ENCODE measurements at regions of chr18 and their contacts with region 1.

Region 1: GRCh38 chr18:79644006-79644665 is 35.5 kb upstream of the CTDP1 start:
- DNase-seq: peak; percentile 31 to 71 (median 58)
- H3K4me3 ChIP-seq: no peak overlapping the region
- H3K27ac ChIP-seq: no peak overlapping the region
- H3K4me1 ChIP-seq: no peaks in the 10 kb centered on the region
- H3K27me3 ChIP-seq: peaks cover 12% of the 10 kb centered on the region
- CTCF ChIP-seq: peak; percentile 76 to 98 (median 90)
- POLR2A ChIP-seq: no peak

Region 2: DNA sequence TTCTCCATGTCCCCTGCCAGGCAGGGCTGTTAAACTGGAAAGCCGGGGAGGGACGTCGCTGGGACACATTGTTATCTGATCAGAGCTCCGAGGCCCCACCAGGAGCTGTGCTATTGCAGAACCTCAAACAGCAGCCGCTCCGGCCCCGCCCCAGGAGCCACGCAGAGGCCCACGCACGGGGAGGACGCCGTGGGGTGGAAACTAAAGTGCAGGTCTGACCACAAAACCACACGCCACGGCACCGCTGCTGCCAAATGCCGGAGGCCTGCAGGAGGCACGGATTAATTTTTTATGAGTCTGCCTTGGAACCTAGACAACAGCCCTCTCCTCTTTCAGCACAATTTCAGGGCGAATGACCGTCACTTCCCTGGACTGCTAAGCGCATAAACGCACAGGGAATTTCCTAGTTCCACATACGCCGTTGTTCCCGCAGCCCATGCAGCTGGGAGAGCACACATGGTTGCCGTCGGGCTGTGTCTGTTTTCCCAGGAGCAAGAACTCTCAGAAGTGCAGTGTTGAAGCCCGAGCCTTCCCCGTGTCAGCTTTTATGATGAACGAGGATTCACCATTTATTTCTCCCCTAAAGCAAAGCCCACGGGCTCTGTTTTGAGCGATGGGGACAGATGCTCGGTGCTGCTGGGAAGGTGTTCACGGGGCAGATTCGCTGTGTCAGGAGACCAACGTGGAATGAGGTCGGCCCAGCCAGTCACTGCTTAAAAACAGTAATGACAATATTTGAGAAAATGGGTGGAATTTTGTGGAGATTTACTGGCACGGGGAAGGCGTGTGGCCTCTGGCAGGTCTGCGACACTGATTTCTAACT is 204.7 kb before region 1 on chr18:
- intact Hi-C with region 1: no loop called
- DNase-seq: no peak
- H3K4me3 ChIP-seq: no peak overlapping the region
- H3K27ac ChIP-seq: no peak overlapping the region
- H3K4me1 ChIP-seq: no peaks in the 10 kb centered on the region
- H3K27me3 ChIP-seq: no peaks in the 10 kb centered on the region
- CTCF ChIP-seq: no peak
- POLR2A ChIP-seq: no peak

Region 3: DNA sequence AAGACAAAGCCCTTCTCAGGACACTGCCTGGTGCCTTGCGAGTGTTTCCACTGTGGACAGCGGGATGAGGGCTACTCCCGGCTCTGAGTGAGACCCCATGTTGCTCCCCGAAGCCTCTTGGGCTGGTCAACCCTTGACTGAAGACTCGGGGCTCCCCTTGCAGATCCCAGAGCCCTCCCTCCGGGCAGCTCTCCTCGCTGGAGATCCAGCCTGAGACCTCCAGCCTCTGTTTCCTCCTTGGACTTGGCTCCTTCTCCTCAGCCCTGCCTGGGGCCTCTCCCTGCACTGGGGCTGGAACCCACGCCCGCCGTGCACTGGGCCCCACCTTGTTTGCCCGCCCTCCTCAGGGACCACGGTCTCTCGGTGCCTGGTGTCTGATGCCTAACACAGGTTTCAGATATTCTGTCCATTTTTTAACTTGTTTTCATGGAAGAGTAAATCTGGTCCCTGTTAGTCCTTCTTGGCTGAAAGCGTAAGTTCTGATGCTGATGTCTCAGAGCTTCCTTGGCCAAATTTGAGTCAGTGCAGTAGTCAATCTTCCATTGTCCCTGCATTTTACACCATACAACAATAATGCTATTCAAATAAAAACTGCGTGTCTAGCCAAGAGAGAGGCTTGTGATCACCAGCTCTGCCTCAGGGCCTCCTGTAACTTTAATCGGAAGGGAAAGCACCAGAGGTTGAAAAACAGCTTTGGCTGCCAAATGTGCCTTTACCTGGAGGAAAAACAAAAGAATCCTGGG is 103.8 kb before region 1 on chr18:
- intact Hi-C with region 1: loop called in 1 of 2 experiments (anchors 10 kb)
- DNase-seq: peak in 1 of 7 donors; percentile 17
- H3K4me3 ChIP-seq: no peak overlapping the region
- H3K27ac ChIP-seq: no peak overlapping the region
- H3K4me1 ChIP-seq: no peaks in the 10 kb centered on the region
- H3K27me3 ChIP-seq: no peaks in the 10 kb centered on the region
- CTCF ChIP-seq: no peak
- POLR2A ChIP-seq: no peak

Region 4: GRCh38 chr18:79567481-79568147 is 76.5 kb before region 1 on chr18:
- intact Hi-C with region 1: no loop called
- DNase-seq: peak in 1 of 7 donors; percentile 10
- H3K4me3 ChIP-seq: no peak overlapping the region
- H3K27ac ChIP-seq: no peak overlapping the region
- H3K4me1 ChIP-seq: no peaks in the 10 kb centered on the region
- H3K27me3 ChIP-seq: no peaks in the 10 kb centered on the region
- CTCF ChIP-seq: no peak
- POLR2A ChIP-seq: no peak